AG04449 (cell line): ENCODE measurements at regions of chr3 and their contacts with region 1.

Region 1: DNA sequence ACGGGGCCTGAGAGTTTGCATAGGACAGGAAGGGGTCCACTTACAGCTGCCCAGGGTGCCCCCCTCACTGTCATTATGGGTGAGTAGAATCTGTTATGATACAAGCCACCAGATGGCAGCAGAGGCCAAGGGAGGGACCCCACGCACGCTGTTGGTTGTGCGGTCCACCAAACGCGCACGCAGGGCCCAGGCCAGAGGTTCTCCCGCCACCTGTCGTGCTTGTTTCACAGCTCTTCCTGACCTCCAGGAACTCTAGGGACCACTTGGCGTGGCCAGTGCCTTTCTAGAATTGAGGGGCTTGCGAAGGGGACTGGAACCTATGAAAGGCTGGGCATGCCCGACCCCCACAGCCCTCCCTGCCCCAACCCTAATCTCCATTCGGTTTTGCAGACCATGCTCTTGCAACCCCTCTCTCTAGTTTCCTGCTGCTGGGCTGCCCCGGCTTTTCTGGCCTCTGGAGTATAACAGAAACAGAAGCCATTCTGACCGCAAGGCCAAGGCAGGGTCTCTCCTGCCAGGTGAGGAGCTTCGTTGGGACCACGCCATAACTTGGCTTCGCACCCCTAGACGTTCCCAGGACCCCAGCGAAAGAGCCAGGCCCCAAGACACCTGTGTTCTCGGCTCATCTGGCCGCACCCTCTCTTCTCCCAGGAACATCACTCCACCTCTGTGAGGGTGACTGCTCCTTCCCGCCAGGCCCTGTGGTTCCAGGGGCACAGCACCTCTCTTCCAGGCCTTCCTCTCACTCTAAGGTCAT is 46.0 kb downstream of the ALDH1L1 start:
- DNase-seq: no peak
- H3K4me3 ChIP-seq: no peak overlapping the region
- CTCF ChIP-seq: peak; percentile 83

Region 2: DNA sequence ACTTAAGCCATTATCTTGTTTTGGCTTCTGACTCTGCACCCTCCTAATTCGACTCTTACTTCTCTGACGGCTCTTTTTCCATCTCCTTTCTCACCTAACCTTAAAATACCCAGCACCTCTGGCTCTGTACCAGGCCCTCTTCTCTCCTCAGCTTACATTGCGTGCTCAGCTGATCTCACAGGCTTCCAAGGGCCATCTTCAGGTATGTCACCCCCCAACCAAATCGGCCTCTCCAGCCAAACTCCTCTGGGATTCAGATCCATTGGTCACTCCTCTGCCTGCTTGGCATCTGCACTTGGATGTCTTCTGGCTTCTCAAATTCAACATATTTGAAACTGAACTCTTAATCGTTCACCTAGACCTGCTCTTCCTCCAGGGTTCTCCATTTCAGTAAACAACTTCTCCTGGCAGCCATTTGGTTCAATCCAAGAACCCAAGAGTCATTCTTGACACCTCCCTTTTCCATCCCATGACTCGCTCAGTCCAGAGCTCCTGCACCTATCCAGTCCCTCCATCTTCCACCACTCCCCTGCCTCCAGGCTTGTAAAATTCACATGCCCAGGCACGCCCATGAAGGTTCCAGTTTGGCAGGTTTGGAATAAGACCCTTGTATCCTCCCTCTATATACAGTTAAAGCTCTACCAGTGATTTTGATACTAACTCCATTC is 15.3 kb before region 1 on chr3:
- CTCF ChIA-PET with region 1: interaction called, 44 read pairs
- POLR2A ChIA-PET with region 1: no interaction called
- DNase-seq: no peak
- H3K4me3 ChIP-seq: no peak overlapping the region
- CTCF ChIP-seq: no peak

Region 3: GRCh38 chr3:126146525-126147146 is 12.2 kb after region 1 on chr3:
- CTCF ChIA-PET with region 1: interaction called, 40 read pairs
- POLR2A ChIA-PET with region 1: no interaction called
- DNase-seq: no peak
- H3K4me3 ChIP-seq: no peak overlapping the region
- CTCF ChIP-seq: no peak

Region 4: DNA sequence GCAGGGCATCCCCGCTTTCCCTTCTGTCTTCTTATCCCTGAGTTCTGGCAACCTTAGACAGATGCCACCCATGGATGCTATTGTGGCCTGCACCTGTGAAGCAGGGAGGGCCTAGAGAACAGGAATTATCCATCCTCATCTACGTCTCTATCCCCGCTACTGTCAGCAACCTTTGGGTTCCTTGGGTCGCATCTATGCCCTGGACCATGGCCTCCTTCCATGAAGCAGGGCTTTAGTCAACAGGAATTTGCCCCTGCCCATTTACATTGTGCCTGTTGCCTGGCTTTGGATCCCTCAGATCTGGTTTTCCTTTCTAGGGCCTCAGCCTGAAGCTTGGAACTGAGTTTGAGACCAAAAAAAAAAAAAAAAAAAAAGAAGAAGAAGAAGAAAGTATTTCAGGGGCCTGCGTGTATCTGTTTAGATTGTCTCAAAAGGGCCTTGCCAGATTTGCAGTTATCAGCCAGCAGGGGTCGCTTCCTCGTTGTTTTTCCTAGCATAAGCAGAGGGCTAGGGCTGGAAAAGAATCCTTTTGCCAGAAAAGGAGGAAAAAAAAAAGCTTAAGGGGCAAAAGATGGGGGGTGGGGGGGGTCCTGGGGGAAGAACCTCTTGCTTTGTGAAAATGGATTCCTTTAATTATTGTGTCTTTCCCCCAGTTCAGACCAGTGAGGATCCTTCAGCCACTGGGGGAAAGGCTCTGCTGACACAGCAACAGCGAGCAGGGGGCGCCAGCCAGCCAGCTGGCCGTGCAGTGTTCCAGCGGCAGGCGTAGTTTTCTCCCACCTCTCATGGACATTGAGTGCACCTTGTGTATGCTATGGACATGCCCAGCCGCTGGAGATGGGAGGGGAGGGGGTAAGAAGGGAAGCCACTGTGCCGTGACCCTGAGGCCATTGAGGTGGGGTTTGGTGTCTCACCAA is 111.7 kb after region 1 on chr3:
- CTCF ChIA-PET with region 1: interaction called, 10 read pairs
- POLR2A ChIA-PET with region 1: no interaction called
- DNase-seq: no peak
- H3K4me3 ChIP-seq: no peak overlapping the region
- CTCF ChIP-seq: peak; percentile 59

Region 5: DNA sequence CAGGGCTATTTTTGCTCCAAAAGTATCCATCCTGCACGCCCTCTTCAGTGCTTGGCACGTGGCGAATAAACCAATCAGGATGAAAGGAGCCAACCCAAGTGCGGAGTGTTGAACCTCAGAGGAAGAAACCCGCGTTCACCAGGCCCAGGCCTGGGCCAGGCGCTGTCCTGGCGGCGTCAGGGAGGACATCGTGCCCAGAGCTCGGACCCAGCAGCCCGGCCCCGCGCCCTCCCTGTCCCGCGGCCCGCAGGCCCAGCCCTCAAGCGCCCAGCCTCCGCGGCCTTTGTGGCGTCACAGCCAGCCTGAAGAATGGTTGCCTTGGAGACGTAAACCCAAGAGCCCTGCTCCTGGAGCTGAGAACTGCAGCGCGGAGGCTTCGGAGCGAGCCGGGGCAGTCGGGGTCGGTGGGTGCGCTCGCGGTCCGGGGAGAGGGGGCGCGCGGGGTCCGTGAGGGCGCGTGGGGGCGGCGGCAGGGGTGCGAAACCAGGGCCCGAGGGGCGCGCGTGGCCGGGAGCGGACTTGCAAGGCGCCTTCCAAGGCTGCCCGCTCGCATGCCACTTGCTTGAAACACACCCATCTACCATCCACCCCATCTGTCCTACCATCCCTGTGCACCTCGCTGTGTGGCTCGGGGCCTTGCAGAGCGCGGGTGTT is 260.3 kb after region 1 on chr3 and contains the start of gene CFAP100:
- CTCF ChIA-PET with region 1: interaction called, 74 read pairs
- POLR2A ChIA-PET with region 1: no interaction called
- DNase-seq: no peak
- H3K4me3 ChIP-seq: 0 out of 2 replicates have a peak within 1 kb of the TSS, but pooled peaks have one; percentile 1
- CTCF ChIP-seq: no peak